Mammary epithelial cell (primary cell): ENCODE measurements at regions of chr4 and their contacts with region 1.

Region 1: DNA sequence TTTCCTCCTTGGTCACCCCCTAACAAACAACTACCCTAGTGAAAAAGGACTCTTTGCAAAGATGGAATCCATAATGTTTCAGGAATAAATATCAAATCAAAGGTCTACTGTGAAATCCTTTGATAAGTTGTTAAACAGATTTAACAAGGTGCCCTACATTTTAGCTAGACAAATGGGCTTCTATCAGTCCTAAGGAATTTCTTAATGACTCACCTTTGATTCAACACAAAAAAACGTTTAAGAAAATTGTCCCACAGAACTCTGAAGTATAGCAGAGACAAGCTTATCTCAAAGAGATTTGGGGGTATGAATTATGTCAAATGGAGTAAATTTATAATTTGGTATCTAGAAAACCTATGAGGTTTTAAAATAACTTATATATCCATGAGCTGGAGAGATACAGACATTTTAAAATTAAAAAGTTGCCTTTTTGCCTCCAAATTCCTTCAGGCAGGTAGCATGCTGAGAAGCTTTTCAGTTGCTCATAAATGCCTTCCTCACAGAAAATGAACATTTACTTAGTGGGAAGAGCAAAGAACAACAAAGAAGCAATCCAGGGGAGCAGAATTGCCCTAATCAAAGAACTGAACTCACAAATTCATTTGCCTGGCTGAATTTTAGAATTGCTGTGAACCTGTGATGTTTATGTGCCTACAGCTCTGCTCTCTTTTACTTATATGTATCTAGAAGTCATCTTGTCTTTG is 649.3 kb downstream of the STPG2 start:
- DNase-seq: peak; percentile 52
- H3K4me3 ChIP-seq: no peak overlapping the region
- H3K27ac ChIP-seq: no peak overlapping the region
- H3K4me1 ChIP-seq: peaks cover 41% of the 10 kb centered on the region
- H3K27me3 ChIP-seq: no peaks in the 10 kb centered on the region
- CTCF ChIP-seq: no peak

Region 2: DNA sequence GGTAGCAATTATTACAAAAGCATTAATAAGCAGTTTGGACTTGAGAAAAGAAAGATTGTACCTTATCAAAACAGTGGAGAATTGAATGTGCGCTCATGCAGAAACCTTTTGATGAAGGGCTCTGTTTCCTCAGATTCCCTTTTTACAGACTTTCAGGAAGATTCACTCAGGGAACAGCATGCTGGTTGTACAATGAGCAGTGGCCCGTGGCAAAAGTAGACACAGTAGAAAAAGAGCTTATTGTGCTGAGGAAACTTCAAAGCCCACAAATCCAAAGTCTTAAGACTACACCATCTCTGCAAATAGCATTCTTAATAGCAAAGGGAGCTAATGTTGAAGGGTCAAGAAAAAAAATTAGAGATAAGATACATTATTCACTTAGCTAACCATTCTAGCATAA is 795.1 kb before region 1 on chr4:
- CTCF ChIA-PET with region 1: no interaction called
- dilution Hi-C with region 1: no loop called
- in situ Hi-C with region 1: no loop called
- intact Hi-C with region 1: no loop called
- DNase-seq: no peak
- H3K4me3 ChIP-seq: no peak overlapping the region
- H3K27ac ChIP-seq: no peak overlapping the region
- H3K4me1 ChIP-seq: no peaks in the 10 kb centered on the region
- H3K27me3 ChIP-seq: no peaks in the 10 kb centered on the region
- CTCF ChIP-seq: no peak

Region 3: GRCh38 chr4:97587912-97588311 is 93.9 kb after region 1 on chr4:
- CTCF ChIA-PET with region 1: no interaction called
- dilution Hi-C with region 1: no loop called
- in situ Hi-C with region 1: no loop called
- intact Hi-C with region 1: loop called (anchors 5 kb)
- DNase-seq: peak; percentile 76
- H3K4me3 ChIP-seq: no peak overlapping the region
- H3K27ac ChIP-seq: no peak overlapping the region
- H3K4me1 ChIP-seq: peaks cover 10% of the 10 kb centered on the region
- H3K27me3 ChIP-seq: no peaks in the 10 kb centered on the region
- CTCF ChIP-seq: no peak